Natural killer cell (primary cell): ENCODE measurements at regions of chr12 and their contacts with region 1.

Region 1: GRCh38 chr12:23204933-23205778 is 580.2 kb downstream of the ETNK1 start:
- DNase-seq: peak in 1 of 2 donors; percentile 61
- ATAC-seq: peak; percentile 74 to 88 (median 82)
- H3K4me3 ChIP-seq: no peak overlapping the region
- H3K4me3 Mint-ChIP-seq: no peak overlapping the region
- H3K27ac ChIP-seq: no peak overlapping the region
- H3K27ac Mint-ChIP-seq: no peak overlapping the region
- H3K4me1 ChIP-seq: no peaks in the 10 kb centered on the region
- H3K4me1 Mint-ChIP-seq: no peaks in the 10 kb centered on the region
- H3K27me3 ChIP-seq: no peaks in the 10 kb centered on the region
- H3K27me3 Mint-ChIP-seq: peaks cover 0 to 3% of the 10 kb centered on the region in 2 donors
- CTCF ChIP-seq: peak; percentile 93

Region 2: GRCh38 chr12:23781118-23781517 is 576.0 kb after region 1 on chr12:
- intact Hi-C with region 1: no loop called
- DNase-seq: no peak
- ATAC-seq: no peak
- H3K4me3 ChIP-seq: no peak overlapping the region
- H3K4me3 Mint-ChIP-seq: no peak overlapping the region
- H3K27ac ChIP-seq: no peak overlapping the region
- H3K27ac Mint-ChIP-seq: no peak overlapping the region
- H3K4me1 ChIP-seq: no peaks in the 10 kb centered on the region
- H3K4me1 Mint-ChIP-seq: no peaks in the 10 kb centered on the region
- H3K27me3 ChIP-seq: no peaks in the 10 kb centered on the region
- H3K27me3 Mint-ChIP-seq: no peaks in the 10 kb centered on the region
- CTCF ChIP-seq: no peak

Region 3: DNA sequence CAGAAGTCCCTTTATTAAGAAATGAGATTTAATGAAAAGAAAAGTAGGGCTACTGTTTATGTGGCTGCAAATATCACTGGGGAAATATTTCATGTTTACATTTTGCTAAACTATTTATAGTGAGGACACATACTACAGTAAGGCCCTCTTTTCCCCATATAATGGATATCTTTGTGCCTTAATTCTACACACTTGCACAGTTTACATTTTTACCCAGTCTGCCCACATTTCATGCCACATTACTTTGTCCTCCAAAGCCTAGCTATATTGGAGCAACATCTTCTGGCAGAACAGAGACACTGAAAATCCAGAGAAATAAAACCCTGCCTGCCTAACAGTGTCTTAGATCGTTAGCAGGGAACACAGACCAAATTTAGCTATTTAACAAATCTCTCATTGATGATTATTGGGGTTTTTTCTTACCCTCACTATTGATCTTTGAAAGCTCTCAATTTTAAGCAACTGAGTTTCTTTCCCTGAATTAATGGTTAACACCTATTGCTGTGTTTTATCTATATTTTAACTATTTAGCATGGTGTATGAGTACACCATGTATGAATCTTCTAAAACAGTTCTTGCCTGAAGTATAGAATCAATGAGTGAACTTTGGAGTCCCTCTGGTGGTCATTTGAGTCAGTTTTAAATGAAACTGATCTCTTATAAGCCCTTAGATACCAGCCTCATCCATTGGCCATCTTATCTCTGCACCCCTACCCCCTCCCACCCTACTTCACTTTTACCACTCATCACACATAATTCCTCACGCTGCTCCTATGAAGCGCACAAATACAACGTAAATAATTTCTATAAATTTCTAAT is 1573.5 kb after region 1 on chr12:
- intact Hi-C with region 1: loop called (anchors 2 kb)
- DNase-seq: peak in 1 of 2 donors; percentile 26
- ATAC-seq: peak in 1 of 3 donors; percentile 46
- H3K4me3 ChIP-seq: no peak overlapping the region
- H3K4me3 Mint-ChIP-seq: no peak overlapping the region
- H3K27ac ChIP-seq: no peak overlapping the region
- H3K27ac Mint-ChIP-seq: no peak overlapping the region
- H3K4me1 ChIP-seq: no peaks in the 10 kb centered on the region
- H3K4me1 Mint-ChIP-seq: no peaks in the 10 kb centered on the region
- H3K27me3 ChIP-seq: no peaks in the 10 kb centered on the region
- H3K27me3 Mint-ChIP-seq: peaks cover 3 to 23% of the 10 kb centered on the region in 2 donors
- CTCF ChIP-seq: peak; percentile 16

Region 4: DNA sequence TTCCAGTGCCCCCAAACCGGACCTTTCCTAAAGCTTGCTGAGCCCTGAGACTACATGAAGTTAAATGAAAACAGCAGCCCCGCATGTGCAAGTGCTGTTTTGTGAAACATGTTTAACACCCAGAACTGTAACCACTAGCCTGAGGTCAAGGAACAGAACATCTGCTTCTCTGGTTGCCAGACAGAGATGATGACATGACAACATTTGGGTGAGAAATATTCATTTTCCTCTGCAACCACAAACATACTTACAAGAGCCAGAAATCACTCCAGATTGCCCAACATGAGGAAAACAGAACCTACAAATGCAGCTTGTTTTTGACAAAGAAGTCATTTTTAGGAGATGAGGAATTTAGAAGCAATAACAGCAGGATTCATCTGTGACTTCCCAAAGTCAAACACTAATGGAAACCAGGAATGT is 1633.4 kb after region 1 on chr12:
- intact Hi-C with region 1: loop called (anchors 1 kb)
- DNase-seq: peak in 1 of 2 donors; percentile 16
- ATAC-seq: peak in 1 of 3 donors; percentile 45
- H3K4me3 ChIP-seq: no peak overlapping the region
- H3K4me3 Mint-ChIP-seq: no peak overlapping the region
- H3K27ac ChIP-seq: no peak overlapping the region
- H3K27ac Mint-ChIP-seq: no peak overlapping the region
- H3K4me1 ChIP-seq: no peaks in the 10 kb centered on the region
- H3K4me1 Mint-ChIP-seq: peaks cover 4 to 11% of the 10 kb centered on the region in 2 donors
- H3K27me3 ChIP-seq: no peaks in the 10 kb centered on the region
- H3K27me3 Mint-ChIP-seq: peaks cover 5 to 6% of the 10 kb centered on the region in 2 donors
- CTCF ChIP-seq: no peak